CD8-positive, alpha-beta T cell (primary cell): ENCODE measurements at regions of chr10 and their contacts with region 1.

Region 1: DNA sequence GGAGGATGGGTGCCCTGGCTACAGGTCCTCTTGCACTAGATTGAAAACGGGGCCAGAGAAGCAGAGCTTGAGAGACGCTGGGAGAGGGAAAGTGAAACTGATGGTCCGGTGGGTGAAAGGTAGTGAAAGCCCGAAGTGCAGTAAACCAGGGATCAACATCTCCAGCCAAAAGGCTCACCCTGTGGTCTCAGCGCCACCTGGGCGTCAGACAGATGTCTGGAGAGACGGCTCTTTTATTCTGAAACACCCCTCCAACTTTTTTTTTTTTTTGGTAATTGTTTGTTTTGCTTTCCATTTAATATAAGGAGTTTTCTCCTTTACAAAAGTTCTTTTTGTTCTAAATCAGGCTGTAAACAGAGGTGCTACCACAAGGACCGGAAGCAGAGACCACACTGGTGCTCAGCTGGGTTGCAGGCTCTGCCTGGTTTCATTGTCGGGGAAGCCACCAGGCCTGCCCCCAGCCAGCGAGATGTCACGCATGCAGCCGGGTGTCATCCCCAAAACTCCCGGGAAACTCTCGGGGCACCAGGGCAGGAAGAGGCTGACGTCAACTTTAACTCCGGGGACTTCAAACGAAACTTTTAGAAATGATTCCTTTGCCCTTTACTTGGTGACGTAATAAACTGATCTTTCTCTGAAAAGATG is 11.2 kb downstream of the IL2RA start:
- DNase-seq: peak; percentile 68 to 99 (median 86)
- ATAC-seq: peak; percentile 79
- H3K4me3 ChIP-seq: peak overlapping the region; percentile 57 to 69
- H3K4me3 Mint-ChIP-seq: peak overlapping the region; percentile 88
- H3K27ac ChIP-seq: peak overlapping the region; percentile 52 to 79
- H3K27ac Mint-ChIP-seq: peak overlapping the region; percentile 96
- H3K4me1 ChIP-seq: peaks cover 44% of the 10 kb centered on the region
- H3K4me1 Mint-ChIP-seq: peaks cover 75% of the 10 kb centered on the region
- H3K27me3 ChIP-seq: no peaks in the 10 kb centered on the region
- H3K27me3 Mint-ChIP-seq: no peaks in the 10 kb centered on the region
- CTCF ChIP-seq: peak; percentile 18

Region 2: GRCh38 chr10:5977471-5978229 is 73.3 kb before region 1 on chr10 and contains the start of gene IL15RA:
- CTCF ChIA-PET with region 1: no interaction called
- POLR2A ChIA-PET with region 1: no interaction called
- intact Hi-C with region 1: loop called (anchors 5 kb)
- DNase-seq: peak; percentile 54 to 91 (median 84)
- ATAC-seq: peak; percentile 78
- H3K4me3 ChIP-seq: peak within 1 kb of the TSS; percentile 92 to 95
- H3K4me3 Mint-ChIP-seq: peak within 1 kb of the TSS; percentile 97
- H3K27ac ChIP-seq: peak within 1 kb of the TSS; percentile 77 to 82
- H3K27ac Mint-ChIP-seq: peak within 1 kb of the TSS; percentile 96
- H3K4me1 ChIP-seq: peaks cover 12% of the 10 kb centered on the region
- H3K4me1 Mint-ChIP-seq: peaks cover 24% of the 10 kb centered on the region
- H3K27me3 ChIP-seq: no peaks in the 10 kb centered on the region
- H3K27me3 Mint-ChIP-seq: no peaks in the 10 kb centered on the region
- CTCF ChIP-seq: no peak
- total RNA-seq, gene IL15RA: 4.8 to 5.4 TPM

Region 3: DNA sequence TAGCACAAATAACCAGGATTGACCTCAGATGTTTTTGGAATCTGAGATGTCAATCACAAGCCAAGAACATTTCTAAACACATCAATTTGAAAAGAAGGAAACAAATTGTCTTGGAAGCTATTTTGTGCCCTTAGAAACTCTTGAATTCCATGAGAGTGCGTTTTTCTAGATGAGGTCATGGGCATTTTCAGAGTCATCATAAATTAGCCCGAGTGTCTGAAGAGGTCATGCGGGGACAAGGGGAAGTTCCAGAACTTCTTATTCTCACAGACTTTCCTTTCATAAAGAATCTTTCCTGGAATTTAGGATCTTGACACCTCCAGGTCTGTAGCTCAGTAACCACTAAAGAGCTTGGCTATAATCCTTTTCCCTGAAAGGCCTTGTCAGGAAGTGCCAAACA is 17.0 kb before region 1 on chr10:
- CTCF ChIA-PET with region 1: interaction called, 9 read pairs
- POLR2A ChIA-PET with region 1: interaction called, 19 read pairs
- intact Hi-C with region 1: loop called in 1 of 2 experiments (anchors 1 kb)
- DNase-seq: no peak
- ATAC-seq: no peak
- H3K4me3 ChIP-seq: no peak overlapping the region
- H3K4me3 Mint-ChIP-seq: no peak overlapping the region
- H3K27ac ChIP-seq: no peak overlapping the region
- H3K27ac Mint-ChIP-seq: no peak overlapping the region
- H3K4me1 ChIP-seq: peaks cover 26% of the 10 kb centered on the region
- H3K4me1 Mint-ChIP-seq: peaks cover 27% of the 10 kb centered on the region
- H3K27me3 ChIP-seq: no peaks in the 10 kb centered on the region
- H3K27me3 Mint-ChIP-seq: no peaks in the 10 kb centered on the region
- CTCF ChIP-seq: no peak

Region 4: DNA sequence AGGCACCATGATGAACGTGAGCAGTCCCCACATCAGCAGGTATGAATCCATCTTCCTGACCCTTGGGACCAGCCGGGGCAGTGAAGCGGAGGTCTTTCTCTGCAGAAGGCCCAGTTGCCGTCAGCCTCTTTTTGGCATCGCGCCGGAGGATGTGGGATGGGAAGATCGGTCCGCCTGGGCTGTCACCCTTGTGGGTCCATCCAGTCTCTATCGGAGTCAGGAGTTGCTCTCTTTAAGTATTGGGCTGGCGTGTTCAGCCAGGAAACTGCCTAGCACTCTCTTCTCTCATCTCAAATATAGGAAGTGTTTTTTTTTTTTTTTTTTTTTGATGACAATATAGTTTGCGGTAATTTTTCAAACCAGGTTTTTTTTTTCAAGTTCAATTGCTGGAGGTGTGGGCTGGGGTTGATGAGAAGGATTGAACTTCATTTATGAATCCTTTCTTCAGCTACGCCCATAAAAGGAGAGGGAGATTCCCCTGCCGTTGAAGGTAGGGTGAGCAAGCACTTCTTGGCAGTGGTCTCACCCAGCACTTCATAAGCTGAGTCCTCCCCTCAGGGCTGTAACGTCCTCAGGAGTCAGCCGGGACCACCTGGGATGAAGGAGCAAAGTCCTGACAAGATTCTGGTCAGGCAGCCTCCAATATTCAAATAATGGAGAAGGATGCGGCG is 11.3 kb after region 1 on chr10 and contains the start of gene IL2RA:
- CTCF ChIA-PET with region 1: interaction called, 29 read pairs
- POLR2A ChIA-PET with region 1: interaction called, 23 read pairs
- intact Hi-C with region 1: loop called (anchors 1 kb)
- DNase-seq: peak in 6 of 9 experiments; percentile 49 to 88 (median 60)
- ATAC-seq: peak; percentile 89
- H3K4me3 ChIP-seq: peak within 1 kb of the TSS in 1 of 2 experiments; percentile 24
- H3K4me3 Mint-ChIP-seq: peak within 1 kb of the TSS; percentile 85
- H3K27ac ChIP-seq: no peak within 1 kb of the TSS
- H3K27ac Mint-ChIP-seq: peak within 1 kb of the TSS; percentile 73
- H3K4me1 ChIP-seq: peaks cover 22% of the 10 kb centered on the region
- H3K4me1 Mint-ChIP-seq: peaks cover 56% of the 10 kb centered on the region
- H3K27me3 ChIP-seq: no peaks in the 10 kb centered on the region
- H3K27me3 Mint-ChIP-seq: no peaks in the 10 kb centered on the region
- CTCF ChIP-seq: no peak
- total RNA-seq, gene IL2RA: 1.8 to 2.5 TPM

Region 5: GRCh38 chr10:6068422-6068821 is 17.5 kb after region 1 on chr10:
- CTCF ChIA-PET with region 1: interaction called, 29 read pairs
- POLR2A ChIA-PET with region 1: interaction called, 23 read pairs
- intact Hi-C with region 1: loop called in 1 of 2 experiments (anchors 2 kb)
- DNase-seq: peak in 5 of 9 experiments; percentile 30 to 72 (median 50)
- ATAC-seq: peak; percentile 81
- H3K4me3 ChIP-seq: peak overlapping the region in 1 of 2 experiments; percentile 23
- H3K4me3 Mint-ChIP-seq: peak overlapping the region; percentile 80
- H3K27ac ChIP-seq: no peak overlapping the region
- H3K27ac Mint-ChIP-seq: peak overlapping the region; percentile 81
- H3K4me1 ChIP-seq: peaks cover 49% of the 10 kb centered on the region
- H3K4me1 Mint-ChIP-seq: peaks cover 73% of the 10 kb centered on the region
- H3K27me3 ChIP-seq: no peaks in the 10 kb centered on the region
- H3K27me3 Mint-ChIP-seq: no peaks in the 10 kb centered on the region
- CTCF ChIP-seq: no peak

Region 6: DNA sequence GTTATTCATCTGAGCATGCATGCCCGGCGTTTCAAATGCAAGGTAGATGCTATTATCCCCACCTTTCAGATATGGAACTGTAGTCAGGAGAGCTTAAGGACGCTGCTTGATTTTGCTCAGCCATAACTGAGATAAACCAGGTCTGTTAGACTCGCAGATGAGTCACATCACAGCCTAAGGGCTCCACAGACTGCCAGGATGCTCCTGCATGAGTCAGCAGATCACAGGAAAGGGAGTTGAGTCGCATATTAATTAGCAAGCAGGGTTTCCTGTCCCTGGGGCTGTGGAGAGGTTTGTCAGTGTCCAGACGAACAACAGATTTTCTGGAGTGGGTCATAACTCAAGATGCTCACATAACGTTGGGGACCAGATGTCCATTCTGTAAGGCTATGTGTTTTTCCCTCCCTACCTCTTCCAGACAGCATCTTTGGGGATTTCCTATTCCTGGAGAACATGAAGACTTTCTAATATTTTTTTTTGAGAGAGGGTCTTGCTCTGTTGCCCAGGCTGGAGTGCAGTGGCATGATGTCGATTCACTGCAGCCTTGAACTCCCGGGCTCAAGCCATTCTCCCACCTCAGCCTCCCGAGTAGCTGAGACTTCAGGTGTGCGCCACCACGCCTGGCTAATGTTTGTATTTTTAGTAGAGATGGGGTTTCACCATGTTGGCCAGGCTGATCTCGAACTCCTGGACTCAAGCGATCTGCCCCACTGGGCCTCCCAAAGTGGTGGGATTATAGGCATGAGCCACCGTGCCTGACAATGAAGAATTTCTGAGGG is 188.5 kb after region 1 on chr10:
- CTCF ChIA-PET with region 1: no interaction called
- POLR2A ChIA-PET with region 1: no interaction called
- intact Hi-C with region 1: no loop called
- DNase-seq: peak in 8 of 9 experiments; percentile 47 to 72 (median 63)
- ATAC-seq: peak; percentile 73
- H3K4me3 ChIP-seq: no peak overlapping the region
- H3K4me3 Mint-ChIP-seq: no peak overlapping the region
- H3K27ac ChIP-seq: no peak overlapping the region
- H3K27ac Mint-ChIP-seq: no peak overlapping the region
- H3K4me1 ChIP-seq: peaks cover 4% of the 10 kb centered on the region
- H3K4me1 Mint-ChIP-seq: peaks cover 9% of the 10 kb centered on the region
- H3K27me3 ChIP-seq: no peaks in the 10 kb centered on the region
- H3K27me3 Mint-ChIP-seq: no peaks in the 10 kb centered on the region
- CTCF ChIP-seq: no peak

Region 7: GRCh38 chr10:7887174-7887816 is 1836.4 kb after region 1 on chr10:
- CTCF ChIA-PET with region 1: no interaction called
- POLR2A ChIA-PET with region 1: no interaction called
- intact Hi-C with region 1: no loop called
- DNase-seq: no peak
- ATAC-seq: no peak
- H3K4me3 ChIP-seq: no peak overlapping the region
- H3K4me3 Mint-ChIP-seq: no peak overlapping the region
- H3K27ac ChIP-seq: no peak overlapping the region
- H3K27ac Mint-ChIP-seq: no peak overlapping the region
- H3K4me1 ChIP-seq: peaks cover 6% of the 10 kb centered on the region
- H3K4me1 Mint-ChIP-seq: peaks cover 58% of the 10 kb centered on the region
- H3K27me3 ChIP-seq: no peaks in the 10 kb centered on the region
- H3K27me3 Mint-ChIP-seq: no peaks in the 10 kb centered on the region
- CTCF ChIP-seq: no peak